ENCODE measurements at regions of chr5 and their contacts with region 1.

Region 1: DNA sequence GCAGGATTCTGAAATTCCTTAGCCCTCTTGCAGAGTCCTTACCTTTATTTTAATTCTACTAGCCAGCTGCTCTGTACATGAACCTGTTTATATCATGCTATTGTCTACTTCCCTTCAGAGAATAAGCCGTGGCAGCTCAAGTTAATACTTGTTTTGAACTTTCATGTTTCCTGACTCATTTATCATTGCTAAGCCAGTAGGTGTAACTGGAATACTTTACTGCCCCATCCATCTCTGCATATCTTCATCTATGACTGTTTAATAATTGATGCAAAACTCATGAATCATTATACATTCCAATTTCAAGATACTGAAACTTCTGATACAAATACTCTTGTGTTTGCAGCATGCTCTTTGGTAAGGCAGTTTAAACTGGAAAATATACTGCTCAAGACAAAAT is 174.7 kb downstream of the PPP2R2B start:
- DNase-seq: no peak
- H3K4me3 ChIP-seq: no peak overlapping the region
- H3K27ac ChIP-seq: peak overlapping the region; percentile 20 to 72; a peak in 2 of 4 replicates
- H3K4me1 ChIP-seq: peaks cover 0 to 18% of the 10 kb centered on the region in 2 experiments; a peak in 3 of 4 replicates
- H3K27me3 ChIP-seq: no peaks in the 10 kb centered on the region
- CTCF ChIP-seq: no peak
- EP300 ChIP-seq: peak; percentile 46 to 68
- RAD21 ChIP-seq: no peak

Region 2: DNA sequence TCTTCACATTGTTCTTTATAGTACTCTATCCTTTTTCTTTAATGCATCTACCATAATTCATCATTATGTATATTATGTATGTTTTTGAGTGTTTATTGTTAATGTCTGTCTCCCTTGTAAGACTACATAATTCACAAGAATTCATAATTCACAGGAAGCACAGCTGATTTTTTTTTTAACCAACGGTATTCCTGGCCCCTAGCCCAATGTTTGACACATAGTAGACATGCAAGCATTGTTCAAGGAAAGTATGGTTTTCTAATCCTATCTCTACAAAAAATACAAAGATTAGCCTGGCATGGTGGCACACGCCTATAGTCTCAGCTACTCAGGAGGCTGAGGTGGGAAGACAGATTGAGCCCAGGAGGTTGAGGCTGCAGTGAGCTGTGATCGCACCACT is 14.1 kb after region 1 on chr5:
- CTCF ChIA-PET with region 1: interaction called, 10 read pairs
- POLR2A ChIA-PET with region 1: no interaction called
- DNase-seq: no peak
- H3K4me3 ChIP-seq: no peak overlapping the region
- H3K27ac ChIP-seq: no peak overlapping the region
- H3K4me1 ChIP-seq: peaks cover 0 to 17% of the 10 kb centered on the region in 2 experiments; a peak in 2 of 4 replicates
- H3K27me3 ChIP-seq: no peaks in the 10 kb centered on the region
- CTCF ChIP-seq: no peak
- EP300 ChIP-seq: no peak
- RAD21 ChIP-seq: no peak

Measured in SK-N-SH (cell line).